ENCODE measurements at regions of chrX and their contacts with region 1.

Region 1: GRCh38 chrX:110407910-110408545 is 49.4 kb downstream of the RTL9 start:
- DNase-seq: peak; percentile 84
- ATAC-seq: peak; percentile 64
- H3K4me3 ChIP-seq: no peak overlapping the region
- H3K27ac ChIP-seq: no peak overlapping the region
- H3K4me1 ChIP-seq: peaks cover 45% of the 10 kb centered on the region
- H3K27me3 ChIP-seq: no peaks in the 10 kb centered on the region
- CTCF ChIP-seq: peak; percentile 78

Region 2: GRCh38 chrX:110156167-110156754 is 251.8 kb before region 1 on chrX:
- CTCF ChIA-PET with region 1: no interaction called
- POLR2A ChIA-PET with region 1: no interaction called
- intact Hi-C with region 1: loop called (anchors 1 kb)
- DNase-seq: peak; percentile 52
- ATAC-seq: no peak
- H3K4me3 ChIP-seq: no peak overlapping the region
- H3K27ac ChIP-seq: no peak overlapping the region
- H3K4me1 ChIP-seq: peaks cover 7% of the 10 kb centered on the region
- H3K27me3 ChIP-seq: no peaks in the 10 kb centered on the region
- CTCF ChIP-seq: peak; percentile 54